ENCODE measurements at regions of chr15 and their contacts with region 1.

Region 1: DNA sequence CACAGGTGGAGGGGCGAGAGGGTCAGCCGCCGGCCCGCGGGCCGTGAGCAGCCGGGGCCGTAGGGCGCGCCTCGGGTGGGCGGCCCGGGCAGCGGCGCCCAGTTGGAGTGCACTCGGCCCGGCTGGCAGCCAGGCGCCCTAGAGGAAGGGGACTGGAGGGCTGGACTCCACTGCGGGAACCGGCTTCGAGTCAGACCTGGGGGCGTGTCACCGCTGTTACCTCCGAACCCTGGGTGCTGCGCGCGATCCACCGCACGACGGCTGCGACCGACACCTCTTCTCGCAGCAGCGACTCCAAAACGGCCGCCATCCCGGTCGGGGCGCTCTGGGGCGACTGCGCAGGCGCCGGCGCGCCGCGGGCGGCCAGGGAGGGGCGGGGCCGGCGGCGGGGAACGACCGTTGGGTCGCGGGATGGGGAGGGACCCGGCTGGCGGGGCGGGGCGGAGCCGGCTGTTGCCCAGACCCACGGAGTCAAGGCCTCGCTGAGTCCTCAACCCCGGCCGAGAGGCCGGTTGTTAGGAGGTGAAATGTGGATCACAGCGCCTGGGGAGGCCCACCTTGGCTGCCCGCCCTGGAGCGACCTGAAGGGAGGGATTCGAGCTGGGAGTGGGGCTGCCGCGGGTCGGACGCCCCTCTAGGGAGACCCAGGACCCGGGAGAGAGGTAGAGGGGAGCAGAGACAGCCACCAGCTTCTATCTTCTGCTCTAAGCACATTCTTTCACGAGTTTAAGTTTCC is at the start of gene CDAN1:
- DNase-seq: peak; percentile 97
- H3K4me3 ChIP-seq: peak within 1 kb of the TSS; percentile 69 to 92 (median 86)
- H3K27ac ChIP-seq: peak within 1 kb of the TSS; percentile 89 to 93 (median 92)
- H3K4me1 ChIP-seq: peaks cover 22 to 40% (median 29%) of the 10 kb centered on the region in 4 donors
- H3K27me3 ChIP-seq: no peaks in the 10 kb centered on the region
- CTCF ChIP-seq: peak in 2 of 3 experiments; percentile 13 to 33
- EP300 ChIP-seq: no peak
- POLR2A ChIP-seq: no peak
- total RNA-seq, gene CDAN1: 8.9 to 12.8 (median 11.3) TPM

Region 2: GRCh38 chr15:42920519-42921227 is 183.7 kb after region 1 on chr15 and contains the start of gene TTBK2:
- intact Hi-C with region 1: loop called (anchors 10 kb)
- DNase-seq: peak; percentile 99
- H3K4me3 ChIP-seq: peak within 1 kb of the TSS; percentile 84 to 100 (median 90)
- H3K27ac ChIP-seq: peak within 1 kb of the TSS; percentile 87 to 98 (median 90)
- H3K4me1 ChIP-seq: peaks cover 5 to 29% (median 25%) of the 10 kb centered on the region in 4 donors
- H3K27me3 ChIP-seq: no peaks in the 10 kb centered on the region
- CTCF ChIP-seq: peak in 2 of 3 experiments; percentile 26 to 34
- EP300 ChIP-seq: no peak
- POLR2A ChIP-seq: peak; percentile 89
- total RNA-seq, gene TTBK2: 19.4 to 33.0 (median 25.1) TPM